CD14-positive monocyte (primary cell): ENCODE measurements at regions of chr6 and their contacts with region 1.

Region 1: GRCh38 chr6:31216208-31216898 is 45.9 kb upstream of the POU5F1 start:
- DNase-seq: peak; percentile 35 to 82 (median 50)
- H3K4me3 ChIP-seq: peak overlapping the region in 1 of 3 experiments; percentile 42
- H3K4me3 Mint-ChIP-seq: no peak overlapping the region
- H3K27ac ChIP-seq: peak overlapping the region; percentile 70 to 71
- H3K27ac Mint-ChIP-seq: peak overlapping the region; percentile 73 to 95 (median 91)
- H3K4me1 ChIP-seq: peaks cover 14 to 22% of the 10 kb centered on the region in 2 donors
- H3K4me1 Mint-ChIP-seq: peaks cover 29% of the 10 kb centered on the region
- H3K27me3 ChIP-seq: no peaks in the 10 kb centered on the region
- H3K27me3 Mint-ChIP-seq: no peaks in the 10 kb centered on the region
- CTCF ChIP-seq: no peak

Region 2: GRCh38 chr6:31163922-31164321 is 52.4 kb before region 1 on chr6:
- intact Hi-C with region 1: no loop called
- DNase-seq: no peak
- H3K4me3 ChIP-seq: no peak overlapping the region
- H3K4me3 Mint-ChIP-seq: no peak overlapping the region
- H3K27ac ChIP-seq: no peak overlapping the region
- H3K27ac Mint-ChIP-seq: no peak overlapping the region
- H3K4me1 ChIP-seq: peaks cover 9 to 12% of the 10 kb centered on the region in 2 donors
- H3K4me1 Mint-ChIP-seq: peaks cover 18% of the 10 kb centered on the region
- H3K27me3 ChIP-seq: no peaks in the 10 kb centered on the region
- H3K27me3 Mint-ChIP-seq: peaks cover 0 to 1% (median 0%) of the 10 kb centered on the region in 3 donors
- CTCF ChIP-seq: no peak

Region 3: DNA sequence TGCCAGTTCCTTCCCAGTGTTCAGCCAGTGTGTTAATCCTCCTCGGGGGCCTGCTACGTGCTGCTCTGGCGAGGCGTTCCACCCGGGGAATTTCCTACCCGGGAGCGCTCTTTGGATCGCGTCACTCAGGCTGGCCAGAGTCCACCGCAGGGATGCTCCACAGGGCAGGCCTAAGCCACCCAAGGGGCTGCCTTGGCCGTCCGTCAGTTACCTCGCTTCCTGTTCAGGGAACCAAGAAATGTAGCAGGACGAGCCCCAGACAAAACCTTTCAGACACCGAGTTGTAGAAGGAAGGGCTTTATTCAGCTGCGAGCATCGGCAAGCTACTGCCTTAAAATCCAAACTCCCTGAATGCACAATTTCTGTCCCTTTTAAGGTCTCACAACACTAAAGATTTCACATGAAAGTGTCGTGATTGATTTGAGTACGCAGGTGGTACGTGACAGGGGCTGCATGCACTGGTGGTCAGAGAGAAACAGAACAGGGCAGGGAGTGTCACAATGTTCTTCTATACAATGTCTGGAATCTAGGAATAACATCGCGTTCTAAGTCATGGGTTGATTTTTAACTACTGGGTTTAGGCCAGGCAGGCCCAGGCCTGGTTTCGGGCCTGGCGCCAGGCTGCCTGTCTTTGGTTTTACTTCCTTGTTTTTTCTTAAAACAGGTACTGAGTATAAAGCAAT is 30.2 kb before region 1 on chr6:
- intact Hi-C with region 1: no loop called
- DNase-seq: no peak
- H3K4me3 ChIP-seq: no peak overlapping the region
- H3K4me3 Mint-ChIP-seq: no peak overlapping the region
- H3K27ac ChIP-seq: no peak overlapping the region
- H3K27ac Mint-ChIP-seq: peak overlapping the region in 3 of 7 donors; percentile 6 to 77 (median 13)
- H3K4me1 ChIP-seq: peaks cover 0 to 3% of the 10 kb centered on the region in 2 donors
- H3K4me1 Mint-ChIP-seq: peaks cover 7% of the 10 kb centered on the region
- H3K27me3 ChIP-seq: no peaks in the 10 kb centered on the region
- H3K27me3 Mint-ChIP-seq: no peaks in the 10 kb centered on the region
- CTCF ChIP-seq: no peak

Region 4: DNA sequence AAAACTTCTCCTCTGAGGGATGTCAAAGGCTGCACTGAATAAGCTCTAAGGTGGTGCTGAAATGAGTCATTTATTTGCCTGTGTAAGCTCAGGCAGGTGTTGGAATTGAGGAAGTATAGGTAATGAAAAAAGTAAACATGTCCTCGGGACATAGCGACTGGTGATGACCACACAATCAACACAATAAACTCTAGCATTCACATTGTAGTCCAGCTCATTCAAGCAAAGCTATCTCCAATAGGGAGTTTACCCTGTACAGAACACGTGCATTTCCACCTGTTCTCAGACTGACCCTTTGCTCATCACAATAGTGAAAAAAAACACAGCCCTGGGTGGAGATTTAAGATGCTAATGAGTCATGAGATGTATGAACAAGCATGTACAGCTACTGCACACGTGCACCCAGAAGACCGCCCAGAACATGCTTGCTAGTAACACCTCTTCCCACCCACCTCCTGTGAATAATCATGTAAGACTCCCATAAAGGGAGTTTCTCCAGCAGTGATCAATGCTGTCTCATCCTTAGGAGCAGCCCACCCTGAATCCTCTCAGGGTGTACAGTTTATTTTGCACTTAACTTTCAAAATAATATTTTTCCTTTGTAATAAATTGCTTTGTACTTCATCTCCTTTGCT is 12.9 kb before region 1 on chr6:
- intact Hi-C with region 1: loop called in 1 of 2 experiments (anchors 2 kb)
- DNase-seq: peak; percentile 60 to 87 (median 71)
- H3K4me3 ChIP-seq: peak overlapping the region; percentile 38 to 100 (median 96)
- H3K4me3 Mint-ChIP-seq: peak overlapping the region; percentile 79 to 94
- H3K27ac ChIP-seq: peak overlapping the region; percentile 59 to 97
- H3K27ac Mint-ChIP-seq: peak overlapping the region; percentile 94 to 99 (median 97)
- H3K4me1 ChIP-seq: peaks cover 61 to 63% of the 10 kb centered on the region in 2 donors
- H3K4me1 Mint-ChIP-seq: peaks cover 73% of the 10 kb centered on the region
- H3K27me3 ChIP-seq: no peaks in the 10 kb centered on the region
- H3K27me3 Mint-ChIP-seq: peaks cover 0 to 2% (median 1%) of the 10 kb centered on the region in 3 donors
- CTCF ChIP-seq: no peak